ENCODE measurements at regions of chr4 and their contacts with region 1.

Region 1: DNA sequence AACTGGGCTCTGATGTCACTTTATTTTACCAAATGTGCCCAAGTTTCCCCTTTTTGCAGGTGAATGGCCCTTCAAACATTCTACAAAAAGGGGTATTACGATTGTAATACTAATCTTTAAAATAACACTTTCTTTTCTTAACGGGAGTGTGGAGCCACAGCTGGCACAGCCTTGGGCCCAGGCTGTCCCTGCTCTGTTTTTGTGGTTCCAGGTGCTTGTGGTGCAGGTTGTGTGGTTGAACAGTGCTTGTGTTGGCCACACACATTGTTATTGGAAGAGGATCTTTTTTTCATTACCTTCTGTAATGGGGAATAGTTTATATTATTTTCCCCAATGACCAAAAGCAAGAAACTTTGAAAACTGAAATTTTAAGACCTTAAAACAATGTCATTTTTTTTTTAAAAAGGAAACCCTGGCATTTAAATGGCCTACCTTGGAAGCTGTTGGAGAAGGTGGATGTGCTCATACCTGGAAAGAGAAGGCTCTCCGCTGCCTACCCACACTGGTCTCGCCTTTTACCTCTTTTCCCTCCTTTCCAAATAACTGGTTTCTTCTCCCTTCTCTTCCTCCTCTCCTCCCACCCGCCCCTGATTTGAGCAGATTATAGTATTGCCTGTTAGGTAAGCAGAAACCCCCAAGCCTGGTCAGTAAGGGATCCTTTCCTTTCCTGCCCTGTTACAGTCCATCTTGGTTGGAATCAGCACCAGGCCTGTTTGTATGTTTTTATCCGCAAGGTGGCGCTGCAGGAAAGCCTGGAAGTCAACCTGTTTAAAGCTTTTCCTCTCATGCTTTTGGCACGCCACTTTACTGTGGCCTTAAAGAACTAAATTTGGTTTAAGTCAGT is 28.6 kb downstream of the HADH start:
- DNase-seq: peak; percentile 68
- H3K27ac ChIP-seq: no peak overlapping the region
- CTCF ChIP-seq: peak; percentile 92

Region 2: GRCh38 chr4:108029016-108029720 is 10.9 kb after region 1 on chr4:
- CTCF ChIA-PET with region 1: no interaction called
- POLR2A ChIA-PET with region 1: no interaction called
- DNase-seq: no peak
- H3K27ac ChIP-seq: no peak overlapping the region
- CTCF ChIP-seq: no peak

Region 3: DNA sequence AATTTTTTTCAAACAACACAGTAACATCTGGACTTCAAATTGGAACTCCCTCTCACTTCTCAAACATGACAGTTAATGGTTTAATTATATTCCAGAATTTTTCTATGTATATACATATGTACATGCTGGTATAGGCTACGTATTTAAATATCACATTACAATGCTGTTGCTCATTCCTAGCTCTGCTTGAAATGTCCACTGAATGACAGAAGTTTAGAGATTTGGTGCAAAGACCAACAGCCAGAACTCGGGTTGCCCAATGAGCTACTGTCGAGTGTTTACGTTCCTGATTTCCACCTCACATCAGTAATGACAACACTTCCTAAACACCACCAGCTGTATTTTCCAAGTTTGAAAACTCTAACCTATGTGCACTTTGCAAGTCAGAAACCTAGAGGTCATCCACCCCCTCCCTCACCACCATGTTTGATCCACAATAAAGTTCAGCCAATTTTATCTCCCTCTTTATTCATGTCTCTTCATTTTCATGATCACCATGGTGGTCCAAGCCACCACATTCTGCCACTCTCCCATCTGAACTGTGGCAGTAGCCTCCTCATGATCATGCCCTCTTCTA is 552.8 kb after region 1 on chr4:
- CTCF ChIA-PET with region 1: interaction called, 22 read pairs
- POLR2A ChIA-PET with region 1: no interaction called
- DNase-seq: no peak
- H3K27ac ChIP-seq: no peak overlapping the region
- CTCF ChIP-seq: no peak

Measured in RWPE1 (cell line).